ENCODE measurements at regions of chr6 and their contacts with region 1.

Region 1: DNA sequence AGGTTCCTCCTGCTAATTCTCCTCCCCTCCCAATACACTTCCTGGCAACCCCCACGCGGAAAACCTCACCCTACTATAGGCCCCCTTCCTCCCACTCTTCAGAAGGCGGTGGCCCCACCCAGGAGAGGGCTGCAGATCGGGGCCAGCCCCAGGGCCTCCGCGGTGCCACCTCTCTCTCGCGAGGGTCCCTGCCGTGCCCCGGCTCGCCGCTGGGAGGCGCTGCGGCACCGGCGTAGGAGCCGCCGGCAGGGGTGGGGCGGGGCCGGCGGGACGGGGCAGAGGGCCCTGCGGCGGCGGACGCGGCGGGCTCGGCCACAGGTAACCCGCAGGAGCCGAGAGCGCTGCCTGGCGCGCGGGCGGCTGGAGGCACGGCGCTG is at the start of gene ANKRD6:
- DNase-seq: peak; percentile 90
- total RNA-seq, gene ANKRD6: 6.5 TPM

Region 2: DNA sequence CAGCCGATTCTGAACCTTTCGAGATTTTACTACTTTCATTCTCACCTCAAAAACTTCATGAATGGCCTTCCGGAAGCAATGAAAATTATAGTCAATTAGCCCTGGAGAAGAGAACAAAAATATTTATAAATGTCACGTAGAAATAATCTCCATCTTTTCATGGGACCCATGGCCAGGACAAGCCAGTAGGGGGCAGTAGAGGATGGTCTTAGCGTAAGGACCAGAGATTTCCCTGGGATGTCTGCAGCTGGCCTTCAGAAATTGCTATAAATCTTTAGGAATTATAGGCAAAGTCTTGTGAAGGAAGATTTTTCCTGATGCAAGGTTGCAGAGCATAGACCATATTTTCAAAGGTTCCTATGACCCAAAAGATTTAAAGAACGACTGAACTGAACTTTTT is 64.8 kb before region 1 on chr6:
- intact Hi-C with region 1: no loop called
- DNase-seq: no peak

Region 3: DNA sequence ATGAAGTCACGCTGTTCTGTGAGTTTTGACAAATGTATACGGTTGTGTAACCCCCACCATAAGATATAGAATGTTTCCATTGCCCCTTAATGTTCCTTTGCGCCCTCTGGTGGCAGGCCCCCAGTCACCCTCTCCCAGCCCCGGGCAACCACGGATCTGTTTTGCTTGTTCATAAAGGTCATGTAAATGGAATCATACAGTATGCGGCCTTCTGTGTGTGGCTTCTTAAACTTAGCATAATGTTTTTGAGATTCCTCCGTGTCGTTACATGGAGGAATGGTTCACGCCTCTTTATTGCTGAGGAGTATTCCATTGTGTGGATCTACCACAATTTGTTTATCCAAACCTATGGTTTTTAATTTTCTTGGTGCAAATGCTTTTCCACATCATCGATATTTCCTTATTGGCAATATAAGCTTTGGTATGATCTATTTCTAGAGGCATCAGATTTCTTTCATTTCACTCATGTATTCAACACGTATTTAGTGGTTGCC is 177.3 kb after region 1 on chr6:
- intact Hi-C with region 1: loop called (anchors 1 kb)
- DNase-seq: peak; percentile 86